Esophagus muscularis mucosa (tissue), 4 donors: ENCODE measurements at regions of chr3 and their contacts with region 1.

Region 1: GRCh38 chr3:125045965-125046364 is 9.8 kb downstream of the HEG1 start:
- DNase-seq: no peak
- H3K4me3 ChIP-seq: no peak overlapping the region
- H3K27ac ChIP-seq: peak overlapping the region in 3 of 4 donors; percentile 79 to 87 (median 85)
- H3K4me1 ChIP-seq: peaks cover 95 to 98% (median 97%) of the 10 kb centered on the region in 4 donors
- H3K27me3 ChIP-seq: no peaks in the 10 kb centered on the region
- CTCF ChIP-seq: no peak
- EP300 ChIP-seq: no peak
- POLR2A ChIP-seq: no peak

Region 2: DNA sequence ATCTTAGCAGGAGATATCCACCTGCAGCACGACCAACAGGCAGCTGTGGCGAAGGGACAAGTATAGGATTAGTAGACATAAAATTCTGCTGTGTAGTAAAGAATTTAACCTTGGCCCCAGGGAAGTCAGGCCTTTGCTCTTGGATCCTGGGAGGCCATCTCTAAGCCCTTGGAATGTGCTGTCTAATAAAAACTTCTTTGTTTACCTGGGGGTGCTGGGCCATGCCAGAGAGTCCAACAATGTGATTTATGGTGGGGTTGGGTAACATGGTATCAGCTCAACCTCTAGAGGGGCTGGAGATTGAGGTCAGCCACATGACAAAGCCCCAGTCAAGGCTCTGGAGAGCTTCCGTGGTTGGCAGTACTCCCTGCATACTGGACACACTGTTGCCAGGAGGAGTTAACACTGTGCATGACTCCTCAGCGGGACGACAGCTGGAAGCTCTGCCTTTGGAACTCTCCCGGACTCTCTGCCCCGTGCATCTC is 42.6 kb before region 1 on chr3:
- intact Hi-C with region 1: loop called (anchors 5 kb)
- DNase-seq: no peak
- H3K4me3 ChIP-seq: no peak overlapping the region
- H3K27ac ChIP-seq: peak overlapping the region; percentile 49 to 72 (median 63)
- H3K4me1 ChIP-seq: peaks cover 59 to 73% (median 67%) of the 10 kb centered on the region in 4 donors
- H3K27me3 ChIP-seq: no peaks in the 10 kb centered on the region
- CTCF ChIP-seq: no peak
- EP300 ChIP-seq: no peak
- POLR2A ChIP-seq: no peak

Region 3: GRCh38 chr3:125150525-125151441 is 104.8 kb after region 1 on chr3:
- intact Hi-C with region 1: no loop called
- DNase-seq: no peak
- H3K4me3 ChIP-seq: no peak overlapping the region
- H3K27ac ChIP-seq: peak overlapping the region in 1 of 4 donors; percentile 3
- H3K4me1 ChIP-seq: peaks cover 18 to 37% (median 30%) of the 10 kb centered on the region in 4 donors
- H3K27me3 ChIP-seq: no peaks in the 10 kb centered on the region
- CTCF ChIP-seq: peak in 1 of 3 experiments; percentile 45
- EP300 ChIP-seq: no peak
- POLR2A ChIP-seq: no peak